Dendritic cell treated with granulocyte-macrophage colony-stimulating factor and Interleukin-4, amounts not matched to agents 40 ng/mL and 50 ng/mL, for 4 days (primary cell): ENCODE measurements at regions of chr15 and their contacts with region 1.

Region 1: DNA sequence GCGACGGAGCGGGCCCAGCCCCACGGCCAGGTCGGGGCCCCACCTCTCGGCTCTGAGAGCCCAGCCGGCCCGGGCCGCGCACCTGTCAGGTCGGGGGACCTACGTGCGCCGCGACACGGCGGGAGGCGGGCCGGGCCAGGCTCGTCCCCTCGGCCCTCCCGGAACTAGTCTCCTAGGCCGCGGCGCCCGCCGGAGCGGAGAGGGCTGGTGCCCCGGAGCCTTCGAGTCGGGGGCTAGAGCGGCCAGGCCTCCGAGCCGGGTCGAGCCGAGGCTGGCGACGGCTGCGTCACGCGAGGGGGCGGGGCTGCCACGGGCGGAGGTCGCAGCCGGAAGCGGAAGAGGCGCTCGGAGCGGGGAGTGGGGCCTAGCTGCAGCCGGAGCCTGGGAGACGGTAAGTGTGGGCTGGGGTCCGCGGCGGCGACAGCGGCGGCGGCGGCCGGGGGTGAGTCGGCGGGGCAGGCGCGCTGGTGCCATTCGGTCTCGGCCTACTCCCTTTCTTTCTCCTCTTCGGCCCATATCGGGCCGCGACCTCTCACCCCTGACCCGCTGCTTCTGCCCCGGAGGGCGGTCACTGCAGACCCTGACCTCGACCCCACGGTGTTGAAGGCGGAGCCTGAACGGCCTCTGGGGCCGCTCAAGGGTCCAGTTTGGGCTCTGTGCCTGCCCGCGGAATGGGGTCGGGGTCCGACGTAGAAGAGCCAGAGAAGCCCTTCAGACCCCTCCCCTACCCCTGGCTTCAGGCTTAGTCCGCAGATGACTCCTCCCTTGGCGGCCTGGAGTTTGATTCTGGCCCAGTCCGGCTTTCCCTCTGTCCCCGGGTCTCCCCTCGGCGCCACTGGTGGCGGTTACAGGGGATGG is at the start of gene CLK3:
- H3K4me3 Mint-ChIP-seq: peak within 1 kb of the TSS; percentile 90
- H3K27ac Mint-ChIP-seq: peak within 1 kb of the TSS; percentile 93
- H3K4me1 Mint-ChIP-seq: peaks cover 45% of the 10 kb centered on the region
- H3K27me3 Mint-ChIP-seq: no peaks in the 10 kb centered on the region

Region 2: DNA sequence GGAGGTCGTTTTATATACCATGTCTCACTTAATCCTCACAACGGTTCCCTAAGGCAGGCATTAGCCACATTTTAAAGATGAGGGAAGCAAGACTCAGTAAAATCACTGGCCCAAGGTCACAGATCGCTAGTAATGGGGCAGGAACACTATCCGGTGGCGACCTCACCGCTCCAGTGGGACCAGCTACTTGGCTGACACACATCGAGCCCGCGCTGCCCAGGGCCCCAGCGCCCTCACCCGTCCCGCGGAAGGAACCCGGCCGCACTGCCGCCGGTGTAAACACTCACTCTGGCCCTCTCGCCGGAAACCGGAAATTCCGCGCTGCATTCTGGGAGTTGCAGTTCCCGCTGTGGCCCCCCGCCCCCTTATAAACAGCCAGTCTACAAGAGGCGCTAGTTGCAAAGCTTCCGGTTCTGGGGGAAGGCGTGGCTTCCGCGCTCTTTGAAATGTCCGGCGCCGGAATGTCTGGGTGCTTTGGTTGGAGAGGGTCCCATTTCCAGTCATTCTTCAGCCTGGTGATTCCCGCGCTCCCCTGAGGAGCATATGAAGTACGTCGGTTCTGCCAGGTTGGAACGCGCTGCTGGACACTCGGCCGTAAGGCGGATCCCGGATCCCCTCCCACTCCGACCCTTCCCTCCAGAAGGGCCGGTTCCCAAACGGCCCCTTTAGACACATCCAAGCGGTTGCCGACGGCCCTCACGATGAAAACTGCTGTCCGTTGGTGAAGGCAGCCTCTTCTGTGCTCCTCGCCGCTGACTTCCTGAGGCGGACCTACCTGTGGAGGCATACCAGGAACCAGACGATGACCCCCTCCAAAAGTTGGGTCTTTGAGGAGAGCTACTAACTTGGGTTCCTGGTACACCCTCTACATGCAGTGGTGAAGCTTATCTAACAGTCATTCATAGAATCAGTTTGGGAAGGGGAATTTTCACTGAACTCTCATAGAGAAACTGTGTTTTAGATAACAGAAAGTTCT is 154.6 kb before region 1 on chr15 and contains the start of gene UBL7:
- intact Hi-C with region 1: loop called (anchors 2 kb)
- H3K4me3 Mint-ChIP-seq: peak within 1 kb of the TSS; percentile 90
- H3K27ac Mint-ChIP-seq: peak within 1 kb of the TSS; percentile 82
- H3K4me1 Mint-ChIP-seq: peaks cover 52% of the 10 kb centered on the region
- H3K27me3 Mint-ChIP-seq: no peaks in the 10 kb centered on the region

Region 3: DNA sequence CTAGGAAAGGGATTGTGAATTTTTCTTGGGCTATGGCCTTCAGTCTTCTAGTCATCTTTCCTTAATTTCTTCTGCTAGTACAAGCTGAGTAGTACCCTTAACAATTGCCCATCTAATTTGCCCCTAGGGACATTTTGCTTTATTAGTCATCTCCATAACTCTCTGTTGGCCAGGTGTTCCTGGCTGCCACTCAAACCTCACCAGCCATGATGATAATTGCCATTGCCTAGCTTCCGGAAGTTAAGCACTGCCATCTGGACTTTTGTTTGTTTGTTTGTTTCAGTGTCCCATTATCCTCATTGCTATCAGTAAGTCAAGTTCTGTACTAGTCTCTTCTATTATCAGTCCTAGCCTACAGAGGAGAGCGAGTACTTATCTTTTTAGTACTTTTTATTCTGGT is 118.2 kb before region 1 on chr15:
- intact Hi-C with region 1: no loop called
- H3K4me3 Mint-ChIP-seq: no peak overlapping the region
- H3K27ac Mint-ChIP-seq: no peak overlapping the region
- H3K4me1 Mint-ChIP-seq: peaks cover 3% of the 10 kb centered on the region
- H3K27me3 Mint-ChIP-seq: no peaks in the 10 kb centered on the region

Region 4: GRCh38 chr15:74540761-74541493 is 74.8 kb before region 1 on chr15 and contains the start of gene ARID3B:
- intact Hi-C with region 1: loop called (anchors 1 kb)
- H3K4me3 Mint-ChIP-seq: peak within 1 kb of the TSS; percentile 96
- H3K27ac Mint-ChIP-seq: peak within 1 kb of the TSS; percentile 95
- H3K4me1 Mint-ChIP-seq: peaks cover 52% of the 10 kb centered on the region
- H3K27me3 Mint-ChIP-seq: peaks cover 23% of the 10 kb centered on the region

Region 5: GRCh38 chr15:74598126-74598842 is 17.5 kb before region 1 on chr15:
- intact Hi-C with region 1: loop called (anchors 2 kb)
- H3K4me3 Mint-ChIP-seq: peak overlapping the region; percentile 92
- H3K27ac Mint-ChIP-seq: peak overlapping the region; percentile 91
- H3K4me1 Mint-ChIP-seq: peaks cover 26% of the 10 kb centered on the region
- H3K27me3 Mint-ChIP-seq: peaks cover 2% of the 10 kb centered on the region